Head of caudate nucleus (tissue), 42 donors: ENCODE measurements at regions of chr2 and their contacts with region 1.

Region 1: GRCh38 chr2:47323009-47323821 is 79.7 kb upstream of the MSH2 start:
- DNase-seq: peak; percentile 70 to 94 (median 84)

Region 2: DNA sequence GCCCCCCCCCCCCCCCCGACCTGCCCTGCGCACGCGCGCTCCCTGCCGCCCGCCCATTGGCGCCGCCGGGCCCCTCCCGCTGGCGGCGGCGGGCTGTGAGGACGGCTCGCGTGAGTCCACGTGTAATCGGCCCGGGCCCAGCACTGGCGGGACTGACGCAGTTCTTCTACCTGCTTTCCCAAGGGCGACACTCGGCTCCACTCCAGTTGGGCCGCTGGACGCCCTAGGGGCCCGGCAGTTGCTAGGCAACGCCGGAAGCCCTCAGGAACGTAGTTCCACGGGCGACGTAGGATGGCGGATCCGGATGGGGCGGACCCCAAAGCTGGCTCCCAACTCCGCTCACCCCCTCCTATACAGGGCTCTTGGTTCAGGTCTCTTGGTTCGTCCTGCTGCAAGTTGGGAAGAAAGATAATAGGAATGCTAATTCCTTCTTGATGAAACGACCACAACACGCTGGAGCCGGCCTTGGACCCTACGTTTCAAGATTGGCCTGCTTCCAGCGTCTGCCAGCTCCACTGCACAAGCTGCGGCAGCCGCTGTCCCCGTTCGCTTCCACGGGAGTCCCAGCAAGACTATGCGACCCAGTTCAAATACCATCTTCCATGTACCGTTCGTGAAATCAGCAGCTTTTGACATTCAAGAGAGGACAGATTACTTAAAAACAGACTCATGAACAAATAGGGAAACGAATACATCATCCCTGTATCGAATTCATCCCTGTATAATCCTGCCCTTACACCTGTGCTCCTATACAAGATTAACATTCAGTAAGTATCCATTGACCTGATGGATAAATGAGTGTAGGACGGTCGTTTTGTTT is 407.2 kb before region 1 on chr2:
- intact Hi-C with region 1: loop called (anchors 2 kb)
- DNase-seq: peak; percentile 81 to 96 (median 90)